Tibial artery (tissue), 4 donors: ENCODE measurements at regions of chr6 and their contacts with region 1.

Region 1: GRCh38 chr6:42745707-42746462 is at the start of gene TBCC:
- DNase-seq: peak; percentile 97 to 98
- H3K4me3 ChIP-seq: peak within 1 kb of the TSS; percentile 80 to 98
- H3K27ac ChIP-seq: peak within 1 kb of the TSS; percentile 90 to 91
- H3K4me1 ChIP-seq: peaks cover 0 to 37% (median 24%) of the 10 kb centered on the region in 4 donors
- H3K27me3 ChIP-seq: no peaks in the 10 kb centered on the region
- CTCF ChIP-seq: no peak

Region 2: GRCh38 chr6:42563697-42564505 is 182.0 kb before region 1 on chr6 and contains the start of gene UBR2:
- intact Hi-C with region 1: loop called (anchors 5 kb)
- DNase-seq: peak; percentile 98 to 99
- H3K4me3 ChIP-seq: peak within 1 kb of the TSS; percentile 97 to 98
- H3K27ac ChIP-seq: peak within 1 kb of the TSS; percentile 97 to 99
- H3K4me1 ChIP-seq: peaks cover 0 to 33% (median 16%) of the 10 kb centered on the region in 4 donors
- H3K27me3 ChIP-seq: no peaks in the 10 kb centered on the region
- CTCF ChIP-seq: peak in 1 of 2 experiments; percentile 14

Region 3: DNA sequence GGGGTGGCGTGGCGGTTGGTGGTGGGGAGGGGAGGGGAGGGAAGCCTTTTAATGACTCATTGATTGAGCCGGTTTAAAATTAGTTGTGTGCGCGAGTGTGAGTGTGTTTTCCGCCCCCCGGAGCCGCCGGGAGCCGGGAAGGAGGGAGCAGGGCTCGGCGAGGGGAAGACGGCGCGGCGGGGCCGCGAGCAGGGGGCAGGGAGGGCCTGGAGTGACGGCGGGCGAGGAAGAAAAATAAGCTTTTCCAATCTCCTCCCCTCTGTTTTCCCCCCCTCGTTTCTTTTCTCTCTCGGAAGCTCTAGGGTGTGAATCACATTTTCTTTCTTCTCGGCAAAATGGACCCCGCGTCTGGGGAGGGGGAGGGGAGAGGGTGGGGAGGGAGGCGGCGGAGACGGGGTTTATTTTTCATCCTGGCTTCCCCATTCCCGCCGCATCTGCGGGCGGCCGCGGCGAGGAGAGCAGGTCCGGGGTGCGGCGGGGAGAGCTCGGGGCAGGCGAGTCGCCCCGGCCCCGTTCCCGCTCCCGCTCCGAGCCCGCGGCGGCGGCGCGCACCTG is 36.8 kb after region 1 on chr6:
- intact Hi-C with region 1: loop called (anchors 2 kb)
- DNase-seq: peak; percentile 77 to 91
- H3K4me3 ChIP-seq: peak overlapping the region; percentile 73 to 85
- H3K27ac ChIP-seq: peak overlapping the region; percentile 99
- H3K4me1 ChIP-seq: peaks cover 0 to 41% (median 24%) of the 10 kb centered on the region in 4 donors
- H3K27me3 ChIP-seq: no peaks in the 10 kb centered on the region
- CTCF ChIP-seq: no peak